B cell (primary cell): ENCODE measurements at regions of chr15 and their contacts with region 1.

Region 1: GRCh38 chr15:69976366-69976994 is 121.2 kb downstream of the TLE3 start:
- DNase-seq: peak; percentile 75
- ATAC-seq: no peak
- H3K4me3 ChIP-seq: no peak overlapping the region
- H3K4me3 Mint-ChIP-seq: no peak overlapping the region
- H3K27ac ChIP-seq: no peak overlapping the region
- H3K27ac Mint-ChIP-seq: no peak overlapping the region
- H3K4me1 ChIP-seq: peaks cover 24 to 29% of the 10 kb centered on the region in 2 donors
- H3K4me1 Mint-ChIP-seq: peaks cover 30% of the 10 kb centered on the region
- H3K27me3 ChIP-seq: peaks cover 0 to 18% (median 3%) of the 10 kb centered on the region in 4 experiments
- H3K27me3 Mint-ChIP-seq: peaks cover 24% of the 10 kb centered on the region
- CTCF ChIP-seq: no peak

Region 2: GRCh38 chr15:69755551-69756310 is 220.7 kb before region 1 on chr15:
- CTCF ChIA-PET with region 1: interaction called, 3 read pairs
- POLR2A ChIA-PET with region 1: interaction called, 3 read pairs
- intact Hi-C with region 1: loop called (anchors 1 kb)
- DNase-seq: peak; percentile 84
- ATAC-seq: peak; percentile 85
- H3K4me3 ChIP-seq: peak overlapping the region in 2 of 5 experiments; percentile 8 to 23
- H3K4me3 Mint-ChIP-seq: peak overlapping the region; percentile 84
- H3K27ac ChIP-seq: peak overlapping the region; percentile 22 to 73
- H3K27ac Mint-ChIP-seq: peak overlapping the region; percentile 91
- H3K4me1 ChIP-seq: peaks cover 69 to 72% of the 10 kb centered on the region in 2 donors
- H3K4me1 Mint-ChIP-seq: peaks cover 79% of the 10 kb centered on the region
- H3K27me3 ChIP-seq: no peaks in the 10 kb centered on the region
- H3K27me3 Mint-ChIP-seq: no peaks in the 10 kb centered on the region
- CTCF ChIP-seq: no peak

Region 3: GRCh38 chr15:69958494-69959084 is 17.9 kb before region 1 on chr15:
- CTCF ChIA-PET with region 1: no interaction called
- POLR2A ChIA-PET with region 1: interaction called, 3 read pairs
- intact Hi-C with region 1: loop called (anchors 1 kb)
- DNase-seq: no peak
- ATAC-seq: no peak
- H3K4me3 ChIP-seq: no peak overlapping the region
- H3K4me3 Mint-ChIP-seq: no peak overlapping the region
- H3K27ac ChIP-seq: no peak overlapping the region
- H3K27ac Mint-ChIP-seq: no peak overlapping the region
- H3K4me1 ChIP-seq: peaks cover 0 to 9% of the 10 kb centered on the region in 2 donors
- H3K4me1 Mint-ChIP-seq: peaks cover 14% of the 10 kb centered on the region
- H3K27me3 ChIP-seq: peaks cover 0 to 7% (median 0%) of the 10 kb centered on the region in 4 experiments
- H3K27me3 Mint-ChIP-seq: peaks cover 8% of the 10 kb centered on the region
- CTCF ChIP-seq: no peak

Region 4: GRCh38 chr15:69997697-69998273 is 21.3 kb after region 1 on chr15:
- CTCF ChIA-PET with region 1: interaction called, 3 read pairs
- POLR2A ChIA-PET with region 1: interaction called, 8 read pairs
- intact Hi-C with region 1: loop called (anchors 1 kb)
- DNase-seq: peak; percentile 52
- ATAC-seq: peak; percentile 62
- H3K4me3 ChIP-seq: no peak overlapping the region
- H3K4me3 Mint-ChIP-seq: peak overlapping the region; percentile 53
- H3K27ac ChIP-seq: no peak overlapping the region
- H3K27ac Mint-ChIP-seq: peak overlapping the region; percentile 88
- H3K4me1 ChIP-seq: peaks cover 55 to 71% of the 10 kb centered on the region in 2 donors
- H3K4me1 Mint-ChIP-seq: peaks cover 88% of the 10 kb centered on the region
- H3K27me3 ChIP-seq: no peaks in the 10 kb centered on the region
- H3K27me3 Mint-ChIP-seq: no peaks in the 10 kb centered on the region
- CTCF ChIP-seq: no peak

Region 5: GRCh38 chr15:70014860-70015490 is 38.5 kb after region 1 on chr15:
- CTCF ChIA-PET with region 1: interaction called, 12 read pairs
- POLR2A ChIA-PET with region 1: interaction called, 3 read pairs
- intact Hi-C with region 1: loop called (anchors 1 kb)
- DNase-seq: peak; percentile 72
- ATAC-seq: peak; percentile 76
- H3K4me3 ChIP-seq: peak overlapping the region in 1 of 5 experiments; percentile 37
- H3K4me3 Mint-ChIP-seq: peak overlapping the region; percentile 76
- H3K27ac ChIP-seq: peak overlapping the region; percentile 81 to 84
- H3K27ac Mint-ChIP-seq: peak overlapping the region; percentile 97
- H3K4me1 ChIP-seq: peaks cover 69 to 77% of the 10 kb centered on the region in 2 donors
- H3K4me1 Mint-ChIP-seq: peaks cover 79% of the 10 kb centered on the region
- H3K27me3 ChIP-seq: no peaks in the 10 kb centered on the region
- H3K27me3 Mint-ChIP-seq: no peaks in the 10 kb centered on the region
- CTCF ChIP-seq: no peak

Region 6: DNA sequence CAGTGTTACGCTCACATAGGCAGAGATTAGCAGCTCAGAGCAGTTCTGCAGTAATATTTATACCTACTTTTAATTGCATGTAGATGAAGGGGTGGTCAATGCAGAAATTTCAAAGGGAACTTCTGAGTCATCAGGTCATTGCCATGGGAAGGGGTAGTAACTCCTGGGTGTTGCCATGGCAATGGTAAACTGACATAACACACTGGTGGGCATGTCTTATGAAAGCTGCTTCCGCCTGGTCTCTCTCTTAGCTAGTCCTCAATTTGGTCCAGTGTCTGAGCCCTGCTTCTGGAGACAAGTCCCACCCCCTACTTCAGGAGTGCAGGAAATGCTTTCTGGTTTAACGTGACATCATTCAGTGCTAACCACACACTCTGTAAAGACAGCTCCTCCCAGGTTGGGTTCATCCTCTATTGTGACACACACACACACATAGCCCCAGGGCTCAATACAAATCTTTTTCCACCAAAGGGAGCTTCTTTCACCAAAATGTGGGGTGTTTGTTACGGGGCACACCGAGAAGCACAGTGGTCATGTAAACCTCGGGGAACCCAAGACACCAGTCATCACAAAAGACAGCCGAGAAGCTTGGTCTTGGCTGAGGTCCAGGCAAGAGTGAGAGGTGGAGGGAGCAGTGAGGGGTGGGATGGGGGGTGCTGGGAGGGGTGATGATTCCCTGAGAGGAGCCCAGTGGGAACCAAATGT is 46.7 kb after region 1 on chr15:
- CTCF ChIA-PET with region 1: interaction called, 10 read pairs
- POLR2A ChIA-PET with region 1: interaction called, 6 read pairs
- intact Hi-C with region 1: loop called (anchors 1 kb)
- DNase-seq: peak; percentile 75
- ATAC-seq: peak; percentile 83
- H3K4me3 ChIP-seq: no peak overlapping the region
- H3K4me3 Mint-ChIP-seq: peak overlapping the region; percentile 76
- H3K27ac ChIP-seq: peak overlapping the region; percentile 20 to 48
- H3K27ac Mint-ChIP-seq: peak overlapping the region; percentile 94
- H3K4me1 ChIP-seq: peaks cover 42 to 59% of the 10 kb centered on the region in 2 donors
- H3K4me1 Mint-ChIP-seq: peaks cover 51% of the 10 kb centered on the region
- H3K27me3 ChIP-seq: peaks cover 0 to 5% (median 0%) of the 10 kb centered on the region in 4 experiments
- H3K27me3 Mint-ChIP-seq: peaks cover 3% of the 10 kb centered on the region
- CTCF ChIP-seq: no peak